Endothelial cell of umbilical vein (primary cell): ENCODE measurements at regions of chr9 and their contacts with region 1.

Region 1: DNA sequence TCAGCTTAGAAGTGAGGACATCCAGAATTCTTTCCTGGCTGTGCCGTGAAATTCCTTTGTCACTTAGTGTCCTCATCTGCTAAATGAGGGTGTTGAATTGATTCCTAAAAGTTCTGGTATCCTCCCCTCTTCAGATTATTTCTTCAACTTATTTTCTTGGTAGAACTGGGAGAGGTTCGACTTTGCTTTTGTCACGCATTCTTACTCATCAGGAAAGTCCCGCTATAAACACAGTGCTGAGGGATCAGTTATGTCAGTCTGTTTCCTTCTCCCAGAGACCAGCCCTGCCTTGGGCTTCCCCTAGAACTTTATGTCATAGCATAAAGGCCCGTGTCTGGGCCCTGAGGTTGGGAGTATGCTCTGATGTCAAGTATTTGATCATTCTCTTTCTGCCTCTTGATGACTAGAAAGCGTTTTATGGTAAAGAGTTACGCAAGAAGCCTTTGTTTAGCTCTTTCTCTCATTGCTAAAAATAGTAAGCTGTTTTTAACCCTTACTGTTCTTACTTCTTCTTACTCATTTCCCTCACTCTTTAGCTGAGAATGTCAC is 29.6 kb downstream of the MTAP start:
- DNase-seq: peak; percentile 80
- H3K4me3 ChIP-seq: no peak overlapping the region
- H3K27ac ChIP-seq: peak overlapping the region; percentile 84
- H3K4me1 ChIP-seq: peaks cover 32% of the 10 kb centered on the region
- H3K27me3 ChIP-seq: no peaks in the 10 kb centered on the region
- CTCF ChIP-seq: no peak
- POLR2A ChIP-seq: no peak

Region 2: DNA sequence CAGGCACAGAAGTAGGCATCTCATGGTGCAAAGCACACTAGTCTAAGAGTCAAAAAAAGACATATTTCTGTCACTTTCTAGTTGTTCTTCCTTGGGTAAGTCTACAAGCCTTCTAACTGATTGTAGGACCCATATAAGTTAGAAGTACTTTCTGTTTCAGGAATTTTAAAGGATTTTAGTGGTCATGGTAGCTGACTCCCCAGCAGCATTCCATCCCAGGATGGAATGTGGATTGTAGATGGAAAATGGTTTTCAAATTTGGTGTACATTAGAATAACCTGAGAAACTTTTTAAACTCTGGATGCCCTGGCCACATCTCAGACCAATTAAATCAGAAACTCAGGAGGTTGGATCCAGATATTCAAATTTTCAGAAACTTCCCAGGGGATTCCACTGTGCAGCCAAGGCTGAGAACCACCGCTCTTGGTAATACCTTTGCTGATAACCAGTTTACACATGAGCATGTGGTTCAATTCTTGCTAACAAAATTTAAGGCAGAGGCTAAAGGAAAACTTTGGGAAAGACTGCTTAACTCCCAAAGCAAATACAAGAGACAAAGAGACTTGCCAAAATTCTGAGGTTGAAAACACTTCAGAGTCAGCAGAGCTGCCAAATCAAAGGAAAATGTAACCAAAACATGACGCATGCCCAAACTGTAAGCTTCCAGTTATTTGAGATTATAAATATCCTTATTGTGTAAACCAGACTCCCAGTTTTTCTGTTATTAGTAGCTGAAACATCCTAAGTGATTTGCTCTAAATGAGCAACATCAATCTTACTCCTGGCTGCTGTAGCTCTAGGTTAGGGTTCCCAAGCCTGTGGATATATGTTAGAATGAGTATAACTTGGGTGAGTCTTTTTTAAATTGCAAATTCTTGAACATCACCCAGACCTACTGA is 175.0 kb before region 1 on chr9:
- CTCF ChIA-PET with region 1: no interaction called
- POLR2A ChIA-PET with region 1: no interaction called
- dilution Hi-C with region 1: no loop called
- intact Hi-C with region 1: no loop called
- DNase-seq: no peak
- H3K4me3 ChIP-seq: no peak overlapping the region
- H3K27ac ChIP-seq: no peak overlapping the region
- H3K4me1 ChIP-seq: no peaks in the 10 kb centered on the region
- H3K27me3 ChIP-seq: no peaks in the 10 kb centered on the region
- CTCF ChIP-seq: no peak
- POLR2A ChIP-seq: no peak

Region 3: GRCh38 chr9:21802195-21803000 is 29.6 kb before region 1 on chr9 and contains the start of gene MTAP:
- CTCF ChIA-PET with region 1: no interaction called
- POLR2A ChIA-PET with region 1: no interaction called
- dilution Hi-C with region 1: no loop called
- intact Hi-C with region 1: loop called (anchors 1 kb)
- DNase-seq: peak; percentile 94
- H3K4me3 ChIP-seq: peak within 1 kb of the TSS; percentile 50 to 86 (median 75)
- H3K27ac ChIP-seq: peak within 1 kb of the TSS; percentile 75
- H3K4me1 ChIP-seq: peaks cover 22% of the 10 kb centered on the region
- H3K27me3 ChIP-seq: peaks cover 5 to 10% of the 10 kb centered on the region in 2 experiments
- CTCF ChIP-seq: no peak
- POLR2A ChIP-seq: peak; percentile 88
- total RNA-seq, gene MTAP: 51.2 and 55.1 TPM in 2 replicates

Region 4: DNA sequence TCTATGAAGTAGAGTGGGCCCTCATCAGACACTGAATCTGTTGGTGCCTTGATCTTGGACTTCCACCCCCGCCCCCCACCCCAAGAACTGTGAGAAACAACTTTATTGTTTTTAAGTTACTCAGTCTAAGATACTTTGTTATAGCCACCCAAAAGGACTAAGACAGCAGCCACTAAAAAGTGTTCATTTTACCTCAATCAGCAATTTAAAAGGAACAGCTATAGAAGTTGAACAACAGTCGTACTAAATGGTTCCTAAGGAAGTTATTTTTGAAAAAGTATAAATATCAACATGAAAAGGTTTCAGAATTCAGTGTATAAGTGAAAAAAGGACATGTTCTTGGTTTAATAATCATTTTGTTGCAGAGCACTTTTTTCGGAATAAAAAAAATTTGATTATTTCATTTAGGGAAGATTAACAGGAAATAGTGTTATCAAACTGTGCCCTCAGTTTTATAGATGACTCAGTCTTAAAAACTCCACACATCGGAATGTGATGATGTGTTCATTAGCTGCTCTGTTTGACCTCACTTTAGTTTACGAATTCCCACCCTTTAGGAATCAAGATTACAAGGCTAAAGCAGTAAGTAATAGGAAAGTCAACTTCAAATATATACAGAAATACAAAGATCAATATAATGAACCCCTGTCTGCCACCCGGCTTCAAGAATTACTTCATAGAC is 41.6 kb after region 1 on chr9:
- CTCF ChIA-PET with region 1: interaction called, 3 read pairs
- POLR2A ChIA-PET with region 1: no interaction called
- dilution Hi-C with region 1: no loop called
- intact Hi-C with region 1: loop called (anchors 1 kb)
- DNase-seq: peak; percentile 85
- H3K4me3 ChIP-seq: no peak overlapping the region
- H3K27ac ChIP-seq: peak overlapping the region; percentile 82
- H3K4me1 ChIP-seq: peaks cover 45% of the 10 kb centered on the region
- H3K27me3 ChIP-seq: no peaks in the 10 kb centered on the region
- CTCF ChIP-seq: no peak
- POLR2A ChIP-seq: no peak

Region 5: DNA sequence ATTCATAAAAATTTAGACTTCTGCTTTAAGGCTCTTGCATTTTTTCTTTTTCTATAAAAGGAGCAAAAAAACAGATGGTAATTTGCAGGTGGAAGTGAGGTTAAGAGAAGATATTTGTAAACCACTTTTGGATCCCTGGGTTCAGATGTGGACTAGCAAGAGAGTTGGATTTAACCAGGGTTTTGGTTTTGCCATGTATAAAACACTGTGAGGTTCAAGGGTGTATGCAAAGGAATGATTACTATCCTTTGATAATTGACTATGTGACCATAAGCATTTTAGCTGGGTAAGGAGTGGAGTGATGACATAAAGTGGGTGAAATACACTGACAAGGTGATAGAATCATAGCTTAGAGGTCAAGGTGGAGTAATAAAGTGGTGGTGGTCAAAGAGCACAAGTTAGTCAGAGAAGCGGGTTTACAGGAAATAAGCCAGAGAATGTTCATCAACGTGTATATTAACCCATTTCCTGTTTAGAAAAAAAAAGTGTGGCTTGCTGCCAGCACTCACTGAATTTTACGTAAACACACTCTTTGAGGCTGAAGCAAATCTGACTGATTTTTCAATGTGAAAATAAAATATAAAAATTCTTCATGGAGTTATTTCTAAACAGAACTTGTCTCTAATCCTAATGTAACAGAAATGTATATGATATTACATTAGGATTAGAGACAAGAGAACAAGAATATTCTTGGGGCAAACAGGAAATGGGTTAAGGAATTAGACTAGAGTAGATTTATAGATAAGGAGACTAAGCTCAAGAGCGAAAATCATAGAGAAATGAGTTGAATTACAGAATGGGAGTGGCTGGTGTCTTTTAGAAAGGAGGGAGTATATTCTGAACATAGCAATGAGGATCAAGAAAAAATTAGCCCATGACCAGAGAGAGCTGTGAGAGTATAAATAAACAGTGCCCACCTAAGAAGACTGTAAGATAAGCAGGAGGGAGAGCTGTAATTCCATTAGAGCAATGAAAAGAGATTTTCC is 87.6 kb after region 1 on chr9:
- CTCF ChIA-PET with region 1: interaction called, 5 read pairs
- POLR2A ChIA-PET with region 1: no interaction called
- dilution Hi-C with region 1: no loop called
- intact Hi-C with region 1: loop called (anchors 2 kb)
- DNase-seq: peak; percentile 95
- H3K4me3 ChIP-seq: no peak overlapping the region
- H3K27ac ChIP-seq: peak overlapping the region; percentile 24
- H3K4me1 ChIP-seq: peaks cover 18% of the 10 kb centered on the region
- H3K27me3 ChIP-seq: no peaks in the 10 kb centered on the region
- CTCF ChIP-seq: no peak
- POLR2A ChIP-seq: no peak

Region 6: GRCh38 chr9:22030101-22030598 is 198.1 kb after region 1 on chr9:
- CTCF ChIA-PET with region 1: no interaction called
- POLR2A ChIA-PET with region 1: no interaction called
- dilution Hi-C with region 1: no loop called
- intact Hi-C with region 1: no loop called
- DNase-seq: peak; percentile 83
- H3K4me3 ChIP-seq: no peak overlapping the region
- H3K27ac ChIP-seq: peak overlapping the region; percentile 44
- H3K4me1 ChIP-seq: peaks cover 12% of the 10 kb centered on the region
- H3K27me3 ChIP-seq: no peaks in the 10 kb centered on the region
- CTCF ChIP-seq: no peak
- POLR2A ChIP-seq: no peak